GM12878 (cell line): ENCODE measurements at regions of chr3 and their contacts with region 1.

Region 1: GRCh38 chr3:13419505-13420044 is 547 bp downstream of the NUP210 start:
- DNase-seq: no peak
- ATAC-seq: peak; percentile 25
- H3K4me3 ChIP-seq: peak overlapping the region; percentile 80
- H3K27ac ChIP-seq: peak overlapping the region; percentile 98
- H3K4me1 ChIP-seq: peaks cover 48% of the 10 kb centered on the region
- H3K27me3 ChIP-seq: no peaks in the 10 kb centered on the region
- CTCF ChIP-seq: 0 out of 6 replicates have a peak, but pooled peaks of 1 of the 3 experiments have one; percentile 11
- EP300 ChIP-seq: no peak
- POLR2A ChIP-seq: no peak
- RAD21 ChIP-seq: no peak

Region 2: DNA sequence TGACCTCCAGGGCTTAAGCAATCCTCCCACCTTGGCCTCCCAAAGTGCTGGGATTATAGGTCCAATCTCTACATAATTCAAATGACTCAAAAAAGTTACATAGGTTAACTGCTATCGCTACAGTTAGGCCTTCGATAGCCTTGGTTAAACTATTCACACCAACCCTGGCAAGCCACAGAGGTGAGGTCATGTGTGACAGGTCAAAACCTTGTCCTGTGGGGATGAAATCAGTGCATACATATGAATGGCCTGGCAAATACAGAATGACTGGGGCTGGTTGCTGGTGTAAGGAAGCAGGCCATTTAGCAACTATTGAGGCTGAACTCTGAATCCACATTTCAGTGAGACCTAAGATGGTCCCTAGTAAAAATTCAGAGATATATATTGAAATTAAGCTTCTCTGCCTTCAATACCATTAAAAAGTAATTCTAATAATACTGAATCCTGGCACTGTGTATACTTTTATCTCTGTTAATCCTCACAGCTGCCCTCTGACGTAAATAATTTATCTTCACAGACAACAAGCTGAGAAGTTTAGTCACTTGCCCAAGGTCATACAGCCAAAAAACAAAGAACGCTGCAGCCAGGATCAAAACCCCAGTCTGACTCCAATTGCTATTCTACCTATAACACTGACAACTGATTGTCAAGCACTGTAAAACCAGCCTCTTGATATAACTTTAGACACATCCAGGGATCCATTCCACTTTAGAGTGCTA is 827.4 kb before region 1 on chr3:
- CTCF ChIA-PET with region 1: no interaction called
- POLR2A ChIA-PET with region 1: no interaction called
- RAD21 ChIA-PET with region 1: no interaction called
- SMC1A ChIA-PET with region 1: no interaction called
- in situ Hi-C with region 1: no loop called
- intact Hi-C with region 1: no loop called
- DNase-seq: no peak
- ATAC-seq: no peak
- H3K4me3 ChIP-seq: no peak overlapping the region
- H3K27ac ChIP-seq: no peak overlapping the region
- H3K4me1 ChIP-seq: no peaks in the 10 kb centered on the region
- H3K27me3 ChIP-seq: no peaks in the 10 kb centered on the region
- CTCF ChIP-seq: no peak
- EP300 ChIP-seq: no peak
- POLR2A ChIP-seq: no peak
- RAD21 ChIP-seq: no peak

Region 3: DNA sequence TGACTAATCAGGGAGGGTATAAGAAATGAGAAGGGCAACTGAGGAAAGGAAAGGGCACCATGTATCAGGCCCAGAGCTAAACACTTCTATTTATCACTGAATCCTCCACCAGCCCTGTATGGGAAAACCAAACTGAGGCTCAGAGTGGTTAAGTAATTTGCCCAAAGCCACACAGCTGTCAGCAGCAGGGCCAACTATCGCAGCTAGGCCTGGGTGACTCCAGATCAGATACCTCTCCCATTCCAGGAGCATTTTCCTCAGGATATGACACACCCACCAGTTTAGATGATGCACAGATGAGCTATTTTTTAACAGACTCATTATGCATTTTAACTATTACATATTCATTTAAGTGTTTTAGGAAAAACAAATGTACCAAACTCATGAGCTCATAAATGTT is 14.0 kb before region 1 on chr3:
- CTCF ChIA-PET with region 1: interaction called, 34 read pairs
- POLR2A ChIA-PET with region 1: interaction called, 7 read pairs
- RAD21 ChIA-PET with region 1: interaction called, 4 read pairs
- SMC1A ChIA-PET with region 1: interaction called, 6 read pairs
- in situ Hi-C with region 1: no loop called
- intact Hi-C with region 1: no loop called
- DNase-seq: no peak
- ATAC-seq: no peak
- H3K4me3 ChIP-seq: no peak overlapping the region
- H3K27ac ChIP-seq: no peak overlapping the region
- H3K4me1 ChIP-seq: no peaks in the 10 kb centered on the region
- H3K27me3 ChIP-seq: no peaks in the 10 kb centered on the region
- CTCF ChIP-seq: no peak
- EP300 ChIP-seq: no peak
- POLR2A ChIP-seq: no peak
- RAD21 ChIP-seq: no peak

Region 4: DNA sequence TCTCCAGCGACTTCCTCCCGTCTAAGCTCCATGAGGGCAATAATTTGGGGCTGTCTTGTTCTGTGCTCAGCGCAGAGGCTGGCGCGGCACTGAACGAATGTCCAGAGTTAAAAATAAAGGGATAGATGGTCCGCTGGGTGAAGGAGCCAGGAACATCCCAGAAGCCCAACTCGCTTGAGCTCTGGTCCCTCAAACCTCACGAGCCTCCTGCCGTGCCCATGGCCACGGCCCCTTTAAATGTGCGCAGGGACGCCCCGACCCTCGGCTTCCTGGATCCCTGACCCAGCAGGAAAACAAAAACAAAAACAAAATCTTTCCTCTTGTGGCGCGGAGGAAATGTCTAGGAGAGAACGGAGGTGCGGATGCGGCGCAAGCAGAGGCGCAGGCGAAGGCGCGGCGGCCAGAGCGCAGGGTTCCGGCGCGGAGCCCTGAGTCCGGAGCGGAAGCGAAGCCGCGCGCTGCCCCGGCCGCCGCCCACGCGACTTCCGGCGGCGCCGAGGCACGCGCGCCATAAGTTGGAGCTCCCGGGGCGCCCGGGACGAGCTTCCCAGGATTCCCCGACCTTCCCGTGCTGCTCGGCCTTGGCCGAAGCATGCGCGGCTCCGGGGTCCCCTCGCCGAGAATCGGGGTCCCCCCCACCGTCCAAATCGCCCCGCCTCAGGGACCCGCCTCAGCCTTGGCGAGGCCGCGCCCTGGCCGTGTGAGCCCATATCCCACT is 513.2 kb after region 1 on chr3:
- CTCF ChIA-PET with region 1: no interaction called
- POLR2A ChIA-PET with region 1: no interaction called
- RAD21 ChIA-PET with region 1: no interaction called
- SMC1A ChIA-PET with region 1: no interaction called
- in situ Hi-C with region 1: no loop called
- intact Hi-C with region 1: no loop called
- DNase-seq: no peak
- ATAC-seq: no peak
- H3K4me3 ChIP-seq: no peak overlapping the region
- H3K27ac ChIP-seq: no peak overlapping the region
- H3K4me1 ChIP-seq: no peaks in the 10 kb centered on the region
- H3K27me3 ChIP-seq: no peaks in the 10 kb centered on the region; a peak in 1 of 4 replicates
- CTCF ChIP-seq: no peak
- EP300 ChIP-seq: no peak
- POLR2A ChIP-seq: no peak
- RAD21 ChIP-seq: no peak

Region 5: GRCh38 chr3:14431892-14432834 is 1012.6 kb after region 1 on chr3:
- CTCF ChIA-PET with region 1: no interaction called
- POLR2A ChIA-PET with region 1: no interaction called
- RAD21 ChIA-PET with region 1: no interaction called
- SMC1A ChIA-PET with region 1: no interaction called
- in situ Hi-C with region 1: no loop called
- intact Hi-C with region 1: loop called (anchors 10 kb)
- DNase-seq: peak; percentile 90
- ATAC-seq: peak; percentile 87
- H3K4me3 ChIP-seq: peak overlapping the region; percentile 60
- H3K27ac ChIP-seq: peak overlapping the region; percentile 99
- H3K4me1 ChIP-seq: peaks cover 66% of the 10 kb centered on the region
- H3K27me3 ChIP-seq: no peaks in the 10 kb centered on the region
- CTCF ChIP-seq: no peak
- EP300 ChIP-seq: peak; percentile 51 to 71; a peak in 2 of 4 replicates
- POLR2A ChIP-seq: peak; percentile 87
- RAD21 ChIP-seq: no peak